ENCODE measurements at regions of chr9 and their contacts with region 1.

Region 1: GRCh38 chr9:90870621-90871326 is 69.2 kb downstream of the SYK start:
- DNase-seq: no peak
- ATAC-seq: peak in 1 of 8 donors; percentile 49
- H3K4me3 ChIP-seq: no peak overlapping the region
- H3K27ac ChIP-seq: no peak overlapping the region
- H3K4me1 ChIP-seq: peaks cover 0 to 13% (median 0%) of the 10 kb centered on the region in 9 donors
- H3K27me3 ChIP-seq: peaks cover 0 to 7% (median 0%) of the 10 kb centered on the region in 7 donors
- CTCF ChIP-seq: peak; percentile 72 to 95 (median 84)

Region 2: GRCh38 chr9:89576404-89576839 is 1294.4 kb before region 1 on chr9:
- intact Hi-C with region 1: loop called in 1 of 10 experiments (anchors 5 kb)
- DNase-seq: no peak
- ATAC-seq: no peak
- H3K4me3 ChIP-seq: no peak overlapping the region
- H3K27ac ChIP-seq: no peak overlapping the region
- H3K4me1 ChIP-seq: peaks cover 0 to 16% (median 0%) of the 10 kb centered on the region in 9 donors
- H3K27me3 ChIP-seq: peaks cover 0 to 71% (median 28%) of the 10 kb centered on the region in 7 donors
- CTCF ChIP-seq: peak; percentile 50 to 86 (median 80)

Region 3: DNA sequence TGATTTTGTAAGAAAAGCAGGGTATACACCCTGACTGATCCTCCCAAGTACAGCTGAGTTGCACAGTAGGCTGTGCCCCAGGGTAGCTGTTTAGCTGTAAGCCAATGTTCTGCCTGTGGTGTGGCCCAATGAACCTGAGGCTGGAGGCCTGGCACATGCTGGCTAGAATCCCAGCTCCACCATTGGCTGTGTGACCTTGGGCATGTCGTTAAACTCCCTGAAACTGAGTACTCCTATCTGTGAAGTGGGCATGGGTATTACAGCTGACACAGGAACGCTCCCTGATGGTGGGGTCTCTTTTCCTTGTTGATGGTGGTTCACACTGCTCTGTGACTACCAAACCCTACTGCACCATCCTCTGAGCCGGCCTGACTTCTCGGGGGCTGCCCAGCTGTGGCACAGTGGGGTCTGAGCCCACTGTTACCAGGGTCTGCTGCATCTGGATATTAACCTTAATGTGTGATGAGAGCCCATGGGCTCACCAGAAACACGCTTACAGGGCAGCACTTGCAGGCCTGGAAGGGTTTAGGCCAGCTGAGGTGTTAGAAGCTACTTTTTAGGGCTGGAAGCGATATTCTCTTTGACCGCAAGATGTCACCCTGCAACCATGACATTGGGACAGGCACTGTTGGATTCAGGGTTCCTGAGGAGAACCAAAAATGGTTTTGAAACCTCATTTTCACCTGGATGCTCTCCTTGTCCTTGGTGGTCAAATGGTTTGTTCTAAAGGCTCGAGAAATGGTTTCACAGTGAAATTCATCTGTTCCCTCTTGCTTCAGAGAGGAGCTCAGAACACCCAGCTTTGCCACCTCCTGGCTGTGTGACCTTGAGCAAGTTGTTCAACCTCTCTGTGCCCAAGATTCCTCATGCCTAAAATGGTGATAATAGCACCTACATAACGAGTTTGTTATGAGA is 1272.8 kb before region 1 on chr9:
- intact Hi-C with region 1: loop called in 9 of 10 experiments (anchors 2 to 10 kb)
- DNase-seq: peak in 1 of 2 donors; percentile 61
- ATAC-seq: peak in 7 of 8 donors; percentile 40 to 67 (median 59)
- H3K4me3 ChIP-seq: no peak overlapping the region
- H3K27ac ChIP-seq: no peak overlapping the region
- H3K4me1 ChIP-seq: peaks cover 0 to 3% (median 2%) of the 10 kb centered on the region in 9 donors
- H3K27me3 ChIP-seq: peaks cover 0 to 4% (median 0%) of the 10 kb centered on the region in 7 donors
- CTCF ChIP-seq: peak; percentile 59 to 89 (median 83)

Region 4: DNA sequence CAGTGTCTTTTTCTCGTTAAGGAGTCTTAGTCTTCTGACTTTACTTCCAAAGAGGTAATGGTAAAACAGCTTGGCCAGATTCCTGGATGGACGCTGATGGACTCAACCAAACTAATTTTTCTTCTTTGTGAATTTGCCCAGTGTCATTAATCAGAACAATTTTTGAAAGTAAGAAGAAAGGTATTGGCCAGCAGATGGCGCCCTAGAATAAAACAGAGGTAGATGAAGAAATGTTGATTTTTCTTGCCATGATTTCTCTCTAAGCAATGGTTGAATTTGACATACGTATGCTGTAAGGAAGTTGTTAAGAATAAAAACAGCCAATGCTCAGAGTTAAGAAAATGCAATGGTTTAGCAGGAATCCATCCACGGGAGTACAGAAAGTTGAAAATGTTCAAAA is 728.2 kb before region 1 on chr9:
- intact Hi-C with region 1: loop called (anchors 2 to 10 kb)
- DNase-seq: peak in 1 of 2 donors; percentile 25
- ATAC-seq: no peak
- H3K4me3 ChIP-seq: no peak overlapping the region
- H3K27ac ChIP-seq: no peak overlapping the region
- H3K4me1 ChIP-seq: no peaks in the 10 kb centered on the region
- H3K27me3 ChIP-seq: peaks cover 0 to 17% (median 0%) of the 10 kb centered on the region in 7 donors
- CTCF ChIP-seq: peak in 8 of 9 donors; percentile 26 to 72 (median 67)

Region 5: DNA sequence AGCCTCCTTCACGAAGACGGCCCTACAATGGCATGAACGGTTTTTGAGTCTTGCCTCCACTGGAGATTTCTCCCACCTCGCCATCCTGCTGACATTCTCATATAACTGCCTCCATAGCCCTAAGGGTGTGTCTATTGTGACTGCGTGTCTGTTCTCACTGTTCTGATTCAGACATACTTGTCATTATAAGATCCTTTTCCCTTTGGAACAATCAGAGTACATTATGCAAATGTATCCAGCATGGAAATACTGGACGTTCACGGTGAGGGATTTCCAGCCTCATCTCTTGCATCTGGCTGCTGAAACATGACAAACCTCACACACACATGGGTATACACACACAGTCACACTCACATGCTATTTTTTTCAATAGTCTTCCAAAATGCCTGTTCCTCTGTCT is 630.2 kb before region 1 on chr9:
- intact Hi-C with region 1: loop called in 2 of 10 experiments (anchors 10 kb)
- DNase-seq: no peak
- ATAC-seq: no peak
- H3K4me3 ChIP-seq: no peak overlapping the region
- H3K27ac ChIP-seq: no peak overlapping the region
- H3K4me1 ChIP-seq: no peaks in the 10 kb centered on the region
- H3K27me3 ChIP-seq: no peaks in the 10 kb centered on the region
- CTCF ChIP-seq: no peak

Region 6: GRCh38 chr9:90642570-90643539 is 227.9 kb before region 1 on chr9 and contains the start of gene DIRAS2:
- intact Hi-C with region 1: loop called in 1 of 10 experiments (anchors 5 kb)
- DNase-seq: peak; percentile 16 to 37
- ATAC-seq: peak; percentile 69 to 93 (median 84)
- H3K4me3 ChIP-seq: peak within 1 kb of the TSS in 9 of 10 donors; percentile 22 to 54 (median 47)
- H3K27ac ChIP-seq: no peak within 1 kb of the TSS
- H3K4me1 ChIP-seq: peaks cover 0 to 13% (median 0%) of the 10 kb centered on the region in 9 donors
- H3K27me3 ChIP-seq: peaks cover 0 to 77% (median 50%) of the 10 kb centered on the region in 7 donors
- CTCF ChIP-seq: peak in 7 of 9 donors; percentile 20 to 51 (median 31)
- total RNA-seq, gene DIRAS2: 0.07 to 0.20 (median 0.11) TPM in 4 of 10 donors, not detected in the others

Region 7: DNA sequence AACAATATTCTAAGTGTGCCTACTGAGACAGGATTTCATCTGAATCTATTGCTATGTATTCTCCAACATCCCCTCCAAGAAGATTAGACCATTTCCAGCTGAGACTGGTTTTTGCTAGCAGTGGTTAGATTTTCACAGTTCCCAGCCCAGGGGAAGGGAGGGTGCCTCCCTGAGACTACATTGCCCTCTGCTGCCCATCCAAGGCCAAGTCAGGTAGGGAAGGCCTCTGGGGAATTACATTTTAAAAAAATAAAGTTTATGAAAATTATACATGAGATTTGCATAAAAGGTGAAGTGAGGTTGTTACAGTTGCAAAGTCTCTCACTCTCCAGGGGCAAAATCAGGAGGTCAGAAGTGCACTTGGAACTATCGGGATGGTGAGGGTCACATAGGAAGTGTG is 97.2 kb before region 1 on chr9:
- intact Hi-C with region 1: loop called in 1 of 10 experiments (anchors 5 kb)
- DNase-seq: no peak
- ATAC-seq: no peak
- H3K4me3 ChIP-seq: no peak overlapping the region
- H3K27ac ChIP-seq: peak overlapping the region in 1 of 10 donors; percentile 13
- H3K4me1 ChIP-seq: peaks cover 0 to 40% (median 0%) of the 10 kb centered on the region in 9 donors
- H3K27me3 ChIP-seq: peaks cover 0 to 7% (median 4%) of the 10 kb centered on the region in 7 donors
- CTCF ChIP-seq: peak in 6 of 9 donors; percentile 25 to 49 (median 40)

Measured in heart right ventricle (tissue), 16 donors.